Heart left ventricle (tissue), 16 donors: ENCODE measurements at regions of chr15 and their contacts with region 1.

Region 1: DNA sequence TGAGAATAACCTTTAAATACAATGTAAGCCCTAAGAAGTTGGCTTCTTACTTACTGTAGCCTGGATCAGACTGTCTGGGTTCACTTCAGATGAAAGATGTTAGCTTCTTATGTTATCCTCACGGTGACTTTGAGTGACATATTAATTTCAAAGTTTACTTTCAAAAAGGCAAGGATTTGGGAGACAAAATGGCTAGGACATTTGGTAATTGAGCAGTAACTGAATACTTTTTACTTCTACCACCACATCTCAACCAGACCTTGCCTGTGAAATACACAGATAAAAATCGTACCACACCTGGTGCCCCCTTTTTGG is 36.0 kb upstream of the BNIP2 start:
- DNase-seq: no peak
- ATAC-seq: no peak
- H3K4me3 ChIP-seq: no peak overlapping the region
- H3K27ac ChIP-seq: no peak overlapping the region
- H3K4me1 ChIP-seq: no peaks in the 10 kb centered on the region
- H3K27me3 ChIP-seq: peaks cover 0 to 25% (median 4%) of the 10 kb centered on the region in 9 donors
- CTCF ChIP-seq: no peak
- POLR2A ChIP-seq: no peak

Region 2: GRCh38 chr15:60326824-60327654 is 601.9 kb after region 1 on chr15:
- intact Hi-C with region 1: loop called (anchors 5 to 10 kb)
- DNase-seq: no peak
- ATAC-seq: no peak
- H3K4me3 ChIP-seq: no peak overlapping the region
- H3K27ac ChIP-seq: no peak overlapping the region
- H3K4me1 ChIP-seq: peaks cover 0 to 4% (median 0%) of the 10 kb centered on the region in 12 donors
- H3K27me3 ChIP-seq: peaks cover 0 to 51% (median 23%) of the 10 kb centered on the region in 9 donors
- CTCF ChIP-seq: peak; percentile 65 to 91 (median 78)
- POLR2A ChIP-seq: no peak